A549 (cell line): ENCODE measurements at regions of chr5 and their contacts with region 1.

Region 1: GRCh38 chr5:142713121-142713706 is 27.3 kb upstream of the FGF1 start:
- DNase-seq: peak; percentile 70 to 89
- ATAC-seq: peak; percentile 89 to 93
- H3K4me3 ChIP-seq: peak overlapping the region; percentile 49
- H3K27ac ChIP-seq: peak overlapping the region; percentile 82 to 92
- H3K4me1 ChIP-seq: peaks cover 5% of the 10 kb centered on the region; the same call in 2 of the 3 replicates
- CTCF ChIP-seq: peak; percentile 100
- EP300 ChIP-seq: no peak
- POLR2A ChIP-seq: no peak
- RAD21 ChIP-seq: peak; percentile 43 to 78

Region 2: GRCh38 chr5:142334538-142334937 is 378.7 kb before region 1 on chr5:
- CTCF ChIA-PET with region 1: no interaction called
- POLR2A ChIA-PET with region 1: no interaction called
- DNase-seq: no peak
- ATAC-seq: peak in 1 of 2 experiments; percentile 52; a peak in 2 of 6 replicates
- H3K4me3 ChIP-seq: no peak overlapping the region
- H3K27ac ChIP-seq: no peak overlapping the region
- H3K4me1 ChIP-seq: no peaks in the 10 kb centered on the region
- CTCF ChIP-seq: no peak
- EP300 ChIP-seq: no peak
- POLR2A ChIP-seq: no peak
- RAD21 ChIP-seq: no peak

Region 3: GRCh38 chr5:142492781-142493281 is 220.4 kb before region 1 on chr5:
- CTCF ChIA-PET with region 1: no interaction called
- POLR2A ChIA-PET with region 1: no interaction called
- DNase-seq: no peak
- ATAC-seq: no peak
- H3K4me3 ChIP-seq: no peak overlapping the region
- H3K27ac ChIP-seq: no peak overlapping the region
- H3K4me1 ChIP-seq: no peaks in the 10 kb centered on the region
- CTCF ChIP-seq: no peak
- EP300 ChIP-seq: no peak
- POLR2A ChIP-seq: no peak
- RAD21 ChIP-seq: no peak

Region 4: GRCh38 chr5:142611154-142611553 is 102.1 kb before region 1 on chr5:
- CTCF ChIA-PET with region 1: interaction called, 212 read pairs
- POLR2A ChIA-PET with region 1: no interaction called
- DNase-seq: peak; percentile 68 to 69
- ATAC-seq: peak; percentile 93 to 98
- H3K4me3 ChIP-seq: no peak overlapping the region
- H3K27ac ChIP-seq: no peak overlapping the region
- H3K4me1 ChIP-seq: 0 out of 3 replicates have a peak, but pooled peaks cover 5% of the 10 kb centered on the region
- CTCF ChIP-seq: peak; percentile 93
- EP300 ChIP-seq: no peak
- POLR2A ChIP-seq: no peak
- RAD21 ChIP-seq: peak; percentile 95 to 96

Region 5: GRCh38 chr5:142650060-142650459 is 63.2 kb before region 1 on chr5:
- CTCF ChIA-PET with region 1: interaction called, 104 read pairs
- POLR2A ChIA-PET with region 1: interaction called, 3 read pairs
- DNase-seq: no peak
- ATAC-seq: no peak
- H3K4me3 ChIP-seq: no peak overlapping the region
- H3K27ac ChIP-seq: no peak overlapping the region
- H3K4me1 ChIP-seq: peaks cover 7% of the 10 kb centered on the region
- CTCF ChIP-seq: no peak
- EP300 ChIP-seq: no peak
- POLR2A ChIP-seq: no peak
- RAD21 ChIP-seq: no peak

Region 6: GRCh38 chr5:142685418-142686209 is 27.6 kb before region 1 on chr5 and contains the start of gene FGF1:
- CTCF ChIA-PET with region 1: interaction called, 21 read pairs
- POLR2A ChIA-PET with region 1: no interaction called
- DNase-seq: no peak
- ATAC-seq: peak in 1 of 2 experiments; percentile 35; a peak in 3 of 6 replicates
- H3K4me3 ChIP-seq: no peak within 1 kb of the TSS
- H3K27ac ChIP-seq: no peak within 1 kb of the TSS
- H3K4me1 ChIP-seq: peaks cover 11% of the 10 kb centered on the region
- CTCF ChIP-seq: no peak
- EP300 ChIP-seq: no peak
- POLR2A ChIP-seq: no peak
- RAD21 ChIP-seq: no peak
- polyA plus RNA-seq, gene FGF1: 0.05 and 0.15 TPM in 2 replicates

Region 7: GRCh38 chr5:142748568-142749249 is 35.5 kb after region 1 on chr5:
- CTCF ChIA-PET with region 1: interaction called, 163 read pairs
- POLR2A ChIA-PET with region 1: no interaction called
- DNase-seq: peak in 1 of 2 experiments; percentile 44
- ATAC-seq: peak; percentile 60 to 82; a peak in 4 of 6 replicates
- H3K4me3 ChIP-seq: no peak overlapping the region
- H3K27ac ChIP-seq: no peak overlapping the region
- H3K4me1 ChIP-seq: peaks cover 10% of the 10 kb centered on the region; the same call in 2 of the 3 replicates
- CTCF ChIP-seq: peak; percentile 73
- EP300 ChIP-seq: no peak
- POLR2A ChIP-seq: no peak
- RAD21 ChIP-seq: peak; percentile 90 to 91

Region 8: GRCh38 chr5:142888469-142889085 is 175.4 kb after region 1 on chr5:
- CTCF ChIA-PET with region 1: interaction called, 1,307 read pairs
- POLR2A ChIA-PET with region 1: interaction called, 5 read pairs
- DNase-seq: peak; percentile 60 to 72
- ATAC-seq: peak; percentile 81 to 92
- H3K4me3 ChIP-seq: no peak overlapping the region
- H3K27ac ChIP-seq: no peak overlapping the region
- H3K4me1 ChIP-seq: 0 out of 3 replicates have a peak, but pooled peaks cover 3% of the 10 kb centered on the region
- CTCF ChIP-seq: peak; percentile 91
- EP300 ChIP-seq: no peak
- POLR2A ChIP-seq: no peak
- RAD21 ChIP-seq: peak; percentile 90 to 93